Endothelial cell of umbilical vein (primary cell): ENCODE measurements at regions of chr2 and their contacts with region 1.

Region 1: DNA sequence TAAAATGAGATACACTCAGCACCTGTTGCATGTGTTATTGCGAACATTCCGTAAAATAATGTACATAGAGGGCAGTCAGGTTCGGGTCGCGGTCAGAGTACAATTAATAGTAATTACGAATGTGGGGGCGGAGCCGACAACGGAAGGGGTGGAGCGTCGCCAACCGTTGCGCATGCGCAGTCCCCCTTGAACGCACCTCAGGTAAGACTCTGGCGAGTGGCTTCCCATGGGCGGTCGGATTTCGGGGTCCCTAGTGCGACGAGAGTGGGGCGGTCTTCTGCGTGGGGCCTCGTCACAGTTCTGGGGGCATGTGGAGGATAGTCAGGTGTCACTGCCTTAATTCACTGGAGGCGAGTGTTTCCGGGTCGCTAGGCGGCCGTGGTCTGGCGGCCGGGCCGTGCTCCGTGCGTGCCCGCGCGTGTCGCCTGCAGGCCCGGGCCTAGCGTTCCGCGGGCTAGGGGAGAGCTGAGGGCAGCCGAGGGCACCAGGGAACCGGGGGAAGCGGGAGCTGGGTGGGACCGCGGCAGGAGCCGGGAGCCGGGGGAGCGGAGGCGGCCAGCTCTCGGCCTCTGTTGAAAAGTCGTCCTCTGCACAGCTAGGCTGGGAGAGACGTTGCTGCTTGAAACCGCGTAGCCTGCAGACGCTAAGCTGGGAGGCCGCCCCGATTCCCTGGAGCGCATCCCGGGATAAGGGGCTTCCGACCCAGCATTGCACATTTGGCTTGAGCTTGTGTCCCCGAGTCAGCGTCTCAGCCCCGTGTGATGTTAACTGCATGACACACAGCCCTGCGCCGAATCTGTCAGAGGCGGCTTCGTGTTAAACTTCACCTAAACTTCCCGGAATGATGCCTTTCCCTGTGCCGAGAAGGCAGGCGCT is at the start of gene CEBPZOS:
- DNase-seq: peak; percentile 89
- H3K4me3 ChIP-seq: peak within 1 kb of the TSS; percentile 45 to 71 (median 50)
- H3K27ac ChIP-seq: peak within 1 kb of the TSS; percentile 56
- H3K4me1 ChIP-seq: peaks cover 6% of the 10 kb centered on the region
- H3K27me3 ChIP-seq: no peaks in the 10 kb centered on the region
- CTCF ChIP-seq: no peak
- POLR2A ChIP-seq: peak; percentile 56
- total RNA-seq, gene CEBPZOS: 36.3 and 41.5 TPM in 2 replicates

Region 2: GRCh38 chr2:37059841-37060240 is 136.7 kb before region 1 on chr2:
- CTCF ChIA-PET with region 1: no interaction called
- POLR2A ChIA-PET with region 1: no interaction called
- dilution Hi-C with region 1: no loop called
- intact Hi-C with region 1: no loop called
- DNase-seq: no peak
- H3K4me3 ChIP-seq: no peak overlapping the region
- H3K27ac ChIP-seq: no peak overlapping the region
- H3K4me1 ChIP-seq: no peaks in the 10 kb centered on the region
- H3K27me3 ChIP-seq: no peaks in the 10 kb centered on the region
- CTCF ChIP-seq: no peak
- POLR2A ChIP-seq: no peak

Region 3: DNA sequence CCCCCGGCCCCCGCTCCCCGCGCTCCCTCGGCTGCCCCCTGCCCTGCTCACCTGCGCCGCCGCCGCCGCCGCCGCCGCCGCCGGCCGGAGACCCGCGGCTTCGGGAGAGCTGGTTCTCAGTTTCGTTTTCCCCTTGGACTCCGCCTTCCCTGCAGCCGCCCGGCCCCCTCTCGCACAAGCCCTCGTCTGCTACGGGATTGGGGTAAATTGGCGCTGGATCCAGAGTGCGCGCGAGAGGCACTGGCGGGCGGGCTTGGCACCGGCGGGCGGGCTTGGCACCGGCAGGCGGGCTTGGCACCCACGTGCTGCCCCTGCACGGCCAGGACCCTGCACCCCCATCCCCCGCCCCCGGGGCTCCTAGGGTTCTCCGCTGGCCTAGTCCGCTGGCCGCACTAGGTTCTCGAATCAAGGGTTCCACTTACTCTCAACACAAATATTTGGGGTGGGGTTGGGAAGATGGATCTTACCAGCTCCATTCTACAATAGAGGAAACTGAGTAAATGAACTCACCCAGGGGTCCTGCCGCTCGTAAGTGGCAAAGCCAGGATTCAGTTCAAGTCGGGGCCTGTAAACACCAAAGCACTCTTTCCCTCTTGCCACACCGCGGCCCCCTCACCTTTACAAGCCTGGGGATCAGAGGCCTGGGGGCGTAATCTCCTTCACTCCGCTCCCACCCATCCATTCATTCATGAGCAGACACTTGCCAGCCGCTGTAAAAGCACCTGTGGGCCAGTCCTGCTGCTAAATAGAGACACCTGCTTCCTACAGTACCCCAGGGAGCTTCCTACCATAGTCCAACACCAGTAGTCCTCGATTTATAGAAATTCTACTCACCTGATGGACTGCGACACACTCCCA is 39.5 kb before region 1 on chr2 and contains the start of gene EIF2AK2:
- CTCF ChIA-PET with region 1: no interaction called
- POLR2A ChIA-PET with region 1: no interaction called
- dilution Hi-C with region 1: no loop called
- intact Hi-C with region 1: loop called (anchors 2 kb)
- DNase-seq: peak; percentile 87
- H3K4me3 ChIP-seq: peak within 1 kb of the TSS; percentile 56 to 87 (median 84)
- H3K27ac ChIP-seq: peak within 1 kb of the TSS; percentile 59
- H3K4me1 ChIP-seq: peaks cover 23% of the 10 kb centered on the region
- H3K27me3 ChIP-seq: no peaks in the 10 kb centered on the region
- CTCF ChIP-seq: no peak
- POLR2A ChIP-seq: no peak
- total RNA-seq, gene EIF2AK2: 39.6 and 41.1 TPM in 2 replicates

Region 4: GRCh38 chr2:37181726-37182688 is 14.6 kb before region 1 on chr2:
- CTCF ChIA-PET with region 1: interaction called, 4 read pairs
- POLR2A ChIA-PET with region 1: no interaction called
- dilution Hi-C with region 1: no loop called
- intact Hi-C with region 1: loop called (anchors 1 kb)
- DNase-seq: peak; percentile 88
- H3K4me3 ChIP-seq: no peak overlapping the region
- H3K27ac ChIP-seq: peak overlapping the region; percentile 71
- H3K4me1 ChIP-seq: peaks cover 10% of the 10 kb centered on the region
- H3K27me3 ChIP-seq: peaks cover 0 to 4% of the 10 kb centered on the region in 2 experiments
- CTCF ChIP-seq: no peak
- POLR2A ChIP-seq: no peak

Region 5: DNA sequence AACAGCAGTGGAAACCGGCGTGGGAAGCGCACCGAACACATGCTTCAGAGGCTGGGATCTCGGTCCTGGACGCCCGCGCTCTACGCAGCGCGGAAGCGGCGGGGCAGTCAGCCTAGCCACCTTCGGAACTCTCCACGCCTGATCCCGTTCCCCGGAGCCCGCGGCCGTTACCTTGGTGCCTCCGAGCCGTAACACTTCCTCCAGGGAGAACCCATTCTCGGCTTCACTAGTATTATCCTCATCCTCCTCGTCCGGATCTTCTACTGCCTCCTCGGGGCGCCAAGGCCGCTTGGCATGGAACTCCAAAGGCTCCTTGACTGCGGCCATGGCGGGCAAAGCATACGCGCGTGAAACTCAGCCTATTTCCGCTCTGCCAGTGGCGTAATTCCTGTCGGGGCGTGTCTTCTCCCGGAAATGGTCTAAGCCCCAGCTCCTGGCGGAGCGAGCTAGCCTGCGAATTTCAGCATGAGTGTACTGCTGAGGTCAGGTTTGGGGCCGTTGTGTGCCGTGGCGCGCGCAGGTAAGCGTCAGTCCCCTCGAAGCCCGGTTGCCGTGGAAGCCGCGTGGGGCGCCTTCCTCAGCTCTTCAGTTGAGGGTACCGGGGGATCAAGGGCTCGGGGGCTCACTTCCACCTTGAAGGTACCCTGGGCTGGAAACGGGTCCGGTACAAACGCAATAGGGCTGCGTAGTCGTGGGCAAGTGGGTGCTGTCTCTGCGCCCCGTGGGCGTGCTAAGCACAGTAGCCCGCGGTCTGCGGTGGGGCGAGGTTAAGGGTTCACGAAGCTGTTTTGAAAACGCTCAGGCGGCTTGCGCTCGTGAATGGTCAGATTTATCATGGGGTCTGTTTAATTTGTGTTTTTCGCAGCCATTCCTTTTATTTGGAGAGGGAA is 34.9 kb after region 1 on chr2 and contains the starts of genes CEBPZ and NDUFAF7:
- CTCF ChIA-PET with region 1: no interaction called
- POLR2A ChIA-PET with region 1: no interaction called
- dilution Hi-C with region 1: no loop called
- intact Hi-C with region 1: loop called (anchors 5 kb)
- DNase-seq: peak; percentile 96
- H3K4me3 ChIP-seq: peak within 1 kb of the TSS; percentile 83 to 96 (median 90)
- H3K27ac ChIP-seq: peak within 1 kb of the TSS; percentile 79
- H3K4me1 ChIP-seq: peaks cover 22% of the 10 kb centered on the region
- H3K27me3 ChIP-seq: no peaks in the 10 kb centered on the region
- CTCF ChIP-seq: no peak
- POLR2A ChIP-seq: peak; percentile 85
- total RNA-seq, gene CEBPZ: 36.7 and 46.9 TPM in 2 replicates
- total RNA-seq, gene NDUFAF7: 17.7 and 23.4 TPM in 2 replicates